CD14-positive monocyte (primary cell): ENCODE measurements at regions of chr20 and their contacts with region 1.

Region 1: DNA sequence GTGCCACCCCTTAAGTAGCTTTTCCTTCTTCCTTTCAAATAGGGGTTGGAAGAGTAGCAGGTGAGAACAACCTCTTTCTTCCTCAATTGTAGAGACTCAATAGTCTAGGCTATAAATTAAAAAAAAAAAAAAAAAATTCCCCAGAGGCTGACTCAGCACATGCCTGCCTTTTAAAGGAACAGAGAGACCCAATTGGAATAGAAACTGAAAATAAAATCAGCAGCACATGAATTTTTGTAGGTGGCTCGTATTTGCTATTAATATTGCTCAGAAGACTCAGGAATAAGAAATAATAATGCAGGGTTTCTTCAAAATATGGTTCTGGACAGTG is 19.3 kb downstream of the TOP1 start:
- DNase-seq: peak; percentile 28 to 68 (median 62)
- H3K4me3 ChIP-seq: peak overlapping the region; percentile 12 to 87 (median 77)
- H3K4me3 Mint-ChIP-seq: peak overlapping the region; percentile 72 to 85
- H3K27ac ChIP-seq: peak overlapping the region in 1 of 2 donors; percentile 69
- H3K27ac Mint-ChIP-seq: peak overlapping the region; percentile 72 to 90 (median 80)
- H3K4me1 ChIP-seq: peaks cover 53 to 64% of the 10 kb centered on the region in 2 donors
- H3K4me1 Mint-ChIP-seq: peaks cover 75% of the 10 kb centered on the region
- H3K27me3 ChIP-seq: no peaks in the 10 kb centered on the region
- H3K27me3 Mint-ChIP-seq: peaks cover 0 to 2% (median 0%) of the 10 kb centered on the region in 3 donors
- CTCF ChIP-seq: no peak

Region 2: GRCh38 chr20:41057999-41058896 is 10.3 kb after region 1 on chr20:
- intact Hi-C with region 1: loop called in 1 of 2 experiments (anchors 1 kb)
- DNase-seq: peak in 1 of 3 donors; percentile 47
- H3K4me3 ChIP-seq: no peak overlapping the region
- H3K4me3 Mint-ChIP-seq: no peak overlapping the region
- H3K27ac ChIP-seq: peak overlapping the region in 1 of 2 donors; percentile 0
- H3K27ac Mint-ChIP-seq: peak overlapping the region in 3 of 7 donors; percentile 63 to 74 (median 69)
- H3K4me1 ChIP-seq: peaks cover 0 to 12% of the 10 kb centered on the region in 2 donors
- H3K4me1 Mint-ChIP-seq: peaks cover 26% of the 10 kb centered on the region
- H3K27me3 ChIP-seq: no peaks in the 10 kb centered on the region
- H3K27me3 Mint-ChIP-seq: no peaks in the 10 kb centered on the region
- CTCF ChIP-seq: no peak

Region 3: DNA sequence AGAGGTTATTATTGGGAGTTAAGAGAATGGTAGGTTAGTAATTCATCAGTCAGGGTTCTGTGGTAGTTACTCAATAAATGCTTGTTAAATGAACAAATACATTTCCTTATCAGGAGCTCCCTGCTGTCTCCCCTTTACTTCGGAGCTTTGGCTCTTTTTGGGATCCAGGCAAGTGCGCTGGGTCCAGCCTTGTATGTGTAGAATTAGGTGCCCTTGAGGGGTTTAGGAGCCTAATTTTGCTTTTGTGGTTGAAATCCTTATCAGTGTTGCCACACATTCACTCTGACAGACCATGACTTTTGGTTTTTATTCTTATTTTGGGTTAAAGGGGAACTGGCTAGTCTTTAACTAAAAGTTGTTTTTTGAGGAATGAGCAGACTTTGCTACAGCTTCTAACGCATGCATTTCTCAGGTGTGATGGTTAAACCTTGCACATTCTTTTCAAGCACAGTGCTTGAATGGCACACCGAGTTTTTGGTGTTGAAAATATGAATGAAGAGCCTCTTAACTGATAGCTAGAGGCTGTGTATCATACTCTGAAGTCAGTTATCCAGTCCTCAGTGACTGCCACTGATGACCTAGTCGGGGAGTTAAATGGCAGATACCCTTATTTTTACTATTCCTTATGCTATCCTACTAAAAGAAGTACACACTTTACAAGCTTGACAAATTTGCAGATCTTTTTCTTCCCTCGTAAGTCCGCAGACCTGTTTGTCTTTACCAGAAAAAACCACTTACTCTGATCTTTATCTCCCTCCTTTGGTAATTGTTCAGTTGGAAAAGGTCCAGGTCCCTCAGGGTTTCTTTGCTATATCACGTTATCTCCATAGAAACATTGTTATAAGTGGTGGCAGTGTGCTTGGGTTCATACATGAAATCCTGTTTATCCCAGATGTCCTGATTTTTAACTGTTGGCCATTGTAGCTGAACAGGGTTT is 38.7 kb after region 1 on chr20:
- intact Hi-C with region 1: loop called in 1 of 2 experiments (anchors 5 kb)
- DNase-seq: no peak
- H3K4me3 ChIP-seq: no peak overlapping the region
- H3K4me3 Mint-ChIP-seq: no peak overlapping the region
- H3K27ac ChIP-seq: peak overlapping the region in 1 of 2 donors; percentile 66
- H3K27ac Mint-ChIP-seq: peak overlapping the region in 6 of 7 donors; percentile 8 to 86 (median 74)
- H3K4me1 ChIP-seq: peaks cover 11 to 16% of the 10 kb centered on the region in 2 donors
- H3K4me1 Mint-ChIP-seq: peaks cover 14% of the 10 kb centered on the region
- H3K27me3 ChIP-seq: no peaks in the 10 kb centered on the region
- H3K27me3 Mint-ChIP-seq: no peaks in the 10 kb centered on the region
- CTCF ChIP-seq: no peak